ENCODE measurements at regions of chr4 and their contacts with region 1.

Region 1: GRCh38 chr4:72286185-72286584 is 254.4 kb downstream of the NPFFR2 start:
- DNase-seq: peak; percentile 70
- ATAC-seq: peak; percentile 45; the same call in 1 of the 2 replicates
- H3K4me3 ChIP-seq: no peak overlapping the region
- H3K27ac ChIP-seq: no peak overlapping the region
- H3K4me1 ChIP-seq: no peaks in the 10 kb centered on the region
- H3K27me3 ChIP-seq: no peaks in the 10 kb centered on the region
- CTCF ChIP-seq: peak; percentile 68

Region 2: GRCh38 chr4:72243641-72244040 is 42.5 kb before region 1 on chr4:
- CTCF ChIA-PET with region 1: no interaction called
- POLR2A ChIA-PET with region 1: no interaction called
- intact Hi-C with region 1: loop called (anchors 1 kb)
- DNase-seq: no peak
- ATAC-seq: no peak
- H3K4me3 ChIP-seq: no peak overlapping the region
- H3K27ac ChIP-seq: no peak overlapping the region
- H3K4me1 ChIP-seq: no peaks in the 10 kb centered on the region
- H3K27me3 ChIP-seq: peaks cover 9% of the 10 kb centered on the region; the same call in 1 of the 2 replicates
- CTCF ChIP-seq: no peak